ENCODE measurements at regions of chr7 and their contacts with region 1.

Region 1: GRCh38 chr7:152336754-152337368 is 98.9 kb downstream of the KMT2C start:
- DNase-seq: peak; percentile 21
- ATAC-seq: peak; percentile 80
- H3K4me3 Mint-ChIP-seq: peak overlapping the region; percentile 55
- H3K27ac Mint-ChIP-seq: no peak overlapping the region
- H3K4me1 Mint-ChIP-seq: peaks cover 48% of the 10 kb centered on the region
- H3K27me3 Mint-ChIP-seq: no peaks in the 10 kb centered on the region
- CTCF ChIP-seq: peak; percentile 65

Region 2: DNA sequence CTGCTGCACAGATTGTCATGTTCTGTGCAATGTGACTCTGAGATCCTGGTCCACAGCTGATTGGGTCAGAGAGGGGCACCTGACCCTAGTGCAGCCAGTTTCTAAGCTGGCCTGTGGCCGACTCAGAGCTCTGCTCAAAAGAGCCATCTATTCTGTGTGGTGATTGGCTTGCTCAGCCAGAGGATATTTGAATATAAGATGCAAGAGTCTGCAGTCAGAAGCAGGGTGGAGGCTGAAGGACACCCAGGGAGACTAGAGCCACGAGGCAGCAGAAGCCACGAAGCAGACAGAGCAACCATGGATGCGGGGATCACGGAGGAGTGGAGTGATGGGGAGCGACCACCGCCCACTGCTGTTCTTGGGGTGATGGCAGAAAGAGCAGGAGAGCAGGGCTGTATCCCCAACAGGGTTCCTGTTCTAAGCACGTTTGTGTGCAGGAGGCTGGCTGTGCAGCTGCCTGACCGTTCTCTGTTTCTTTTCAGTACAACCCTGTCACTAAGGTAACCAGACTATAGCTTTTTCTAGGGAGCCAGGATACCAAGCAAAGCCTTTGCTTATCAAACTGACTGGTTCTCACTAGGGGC is 797.7 kb before region 1 on chr7:
- CTCF ChIA-PET with region 1: no interaction called
- POLR2A ChIA-PET with region 1: no interaction called
- intact Hi-C with region 1: no loop called
- DNase-seq: peak; percentile 15
- ATAC-seq: peak; percentile 79
- H3K4me3 Mint-ChIP-seq: no peak overlapping the region
- H3K27ac Mint-ChIP-seq: no peak overlapping the region
- H3K4me1 Mint-ChIP-seq: peaks cover 5% of the 10 kb centered on the region
- H3K27me3 Mint-ChIP-seq: peaks cover 5% of the 10 kb centered on the region
- CTCF ChIP-seq: no peak

Region 3: GRCh38 chr7:152435384-152436110 is 98.7 kb after region 1 on chr7 and contains the start of gene KMT2C:
- CTCF ChIA-PET with region 1: interaction called, 17 read pairs
- POLR2A ChIA-PET with region 1: no interaction called
- intact Hi-C with region 1: loop called (anchors 5 kb)
- DNase-seq: peak; percentile 45
- ATAC-seq: peak; percentile 18
- H3K4me3 Mint-ChIP-seq: peak within 1 kb of the TSS; percentile 89
- H3K27ac Mint-ChIP-seq: peak within 1 kb of the TSS; percentile 89
- H3K4me1 Mint-ChIP-seq: peaks cover 27% of the 10 kb centered on the region
- H3K27me3 Mint-ChIP-seq: no peaks in the 10 kb centered on the region
- CTCF ChIP-seq: no peak
- total RNA-seq, gene KMT2C: 48.5 to 52.8 TPM